ENCODE measurements at regions of chr17 and their contacts with region 1.

Region 1: DNA sequence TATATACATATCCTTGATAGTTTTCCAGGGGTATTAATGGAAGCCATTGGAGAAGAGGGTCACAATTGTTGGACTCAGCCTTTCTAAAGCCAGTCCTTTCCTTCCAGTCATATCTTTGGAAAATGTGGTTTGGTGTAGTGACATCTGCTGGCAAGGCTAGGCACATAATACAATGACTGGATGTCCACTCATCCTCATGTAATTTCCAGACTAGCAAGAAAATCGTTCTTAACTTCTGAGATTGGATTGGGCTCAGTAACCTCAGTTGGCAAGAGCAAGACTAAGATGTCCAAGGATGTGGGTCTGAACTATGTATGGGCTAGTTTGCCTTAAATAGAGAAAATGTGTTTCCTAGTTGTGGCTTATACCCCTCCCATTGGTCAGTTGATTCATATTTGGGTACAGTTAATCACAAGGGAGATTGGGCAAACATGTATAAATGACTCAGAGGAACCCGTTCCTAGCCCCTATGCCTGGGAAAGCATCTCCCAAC is 8.7 kb upstream of the KAT7 start:
- DNase-seq: peak in 1 of 2 donors; percentile 42
- ATAC-seq: peak; percentile 19 to 68 (median 64)
- H3K4me3 ChIP-seq: no peak overlapping the region
- H3K27ac ChIP-seq: peak overlapping the region in 3 of 10 donors; percentile 17 to 60 (median 17)
- H3K4me1 ChIP-seq: peaks cover 4 to 68% (median 46%) of the 10 kb centered on the region in 9 donors
- H3K27me3 ChIP-seq: no peaks in the 10 kb centered on the region
- CTCF ChIP-seq: peak in 8 of 9 donors; percentile 31 to 78 (median 64)

Region 2: DNA sequence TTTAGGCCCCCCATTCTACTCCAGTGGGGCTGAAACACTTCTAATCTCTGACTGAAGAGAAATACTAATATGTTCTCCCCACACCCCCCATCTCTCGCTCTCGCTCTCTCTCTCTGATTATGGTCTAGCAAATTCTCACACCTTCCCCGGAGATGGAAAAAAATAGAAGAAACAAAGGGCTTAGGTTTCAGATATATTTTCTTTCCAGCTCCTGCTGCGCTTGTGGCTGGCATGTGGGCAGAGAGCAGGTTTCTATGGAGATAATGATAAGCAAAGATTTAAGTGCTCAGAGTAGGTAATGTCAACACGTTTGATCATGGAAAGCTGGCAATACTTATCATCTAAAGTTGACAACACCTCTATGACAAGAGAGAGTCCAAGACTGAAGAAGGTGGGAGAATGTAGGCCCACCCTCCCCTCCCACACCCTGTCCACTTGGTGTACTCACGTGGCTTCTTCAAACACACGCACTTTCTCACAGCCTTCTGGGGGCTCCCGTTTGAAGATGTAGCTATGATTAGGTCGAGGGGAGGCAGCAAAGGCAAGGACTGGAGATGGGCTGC is 64.0 kb before region 1 on chr17:
- intact Hi-C with region 1: loop called in 2 of 10 experiments (anchors 5 kb)
- DNase-seq: no peak
- ATAC-seq: no peak
- H3K4me3 ChIP-seq: no peak overlapping the region
- H3K27ac ChIP-seq: peak overlapping the region in 3 of 10 donors; percentile 0 to 75 (median 1)
- H3K4me1 ChIP-seq: peaks cover 0 to 23% (median 7%) of the 10 kb centered on the region in 9 donors
- H3K27me3 ChIP-seq: no peaks in the 10 kb centered on the region
- CTCF ChIP-seq: no peak

Region 3: GRCh38 chr17:49730078-49730784 is 49.6 kb before region 1 on chr17:
- intact Hi-C with region 1: loop called in 2 of 10 experiments (anchors 5 kb)
- DNase-seq: peak; percentile 81 to 93
- ATAC-seq: peak; percentile 95 to 98 (median 96)
- H3K4me3 ChIP-seq: peak overlapping the region in 1 of 10 donors; percentile 1
- H3K27ac ChIP-seq: peak overlapping the region; percentile 49 to 91 (median 78)
- H3K4me1 ChIP-seq: peaks cover 21 to 82% (median 62%) of the 10 kb centered on the region in 9 donors
- H3K27me3 ChIP-seq: no peaks in the 10 kb centered on the region
- CTCF ChIP-seq: no peak

Measured in heart right ventricle (tissue), 16 donors.